Adrenal gland (tissue), 19 donors: ENCODE measurements at regions of chr20 and their contacts with region 1.

Region 1: GRCh38 chr20:12414446-12415187 is 496.9 kb downstream of the BTBD3 start:
- DNase-seq: peak in 4 of 7 donors; percentile 21 to 37 (median 26)
- H3K4me3 ChIP-seq: peak overlapping the region in 1 of 4 donors; percentile 40
- H3K27ac ChIP-seq: no peak overlapping the region
- H3K4me1 ChIP-seq: no peaks in the 10 kb centered on the region
- H3K27me3 ChIP-seq: no peaks in the 10 kb centered on the region
- CTCF ChIP-seq: no peak
- POLR2A ChIP-seq: no peak

Region 2: GRCh38 chr20:12358006-12358656 is 56.5 kb before region 1 on chr20:
- intact Hi-C with region 1: loop called in 1 of 2 experiments (anchors 5 kb)
- DNase-seq: no peak
- H3K4me3 ChIP-seq: no peak overlapping the region
- H3K27ac ChIP-seq: no peak overlapping the region
- H3K4me1 ChIP-seq: no peaks in the 10 kb centered on the region
- H3K27me3 ChIP-seq: no peaks in the 10 kb centered on the region
- CTCF ChIP-seq: peak in 1 of 6 experiments; percentile 7
- POLR2A ChIP-seq: no peak